ENCODE measurements at regions of chr11 and their contacts with region 1.

Region 1: GRCh38 chr11:66317723-66318599 is 1.1 kb upstream of the CD248 start:
- DNase-seq: peak; percentile 46
- ATAC-seq: peak; percentile 8
- H3K4me3 Mint-ChIP-seq: peak overlapping the region; percentile 57
- H3K27ac Mint-ChIP-seq: peak overlapping the region; percentile 96; the same call in 1 of the 2 replicates
- H3K4me1 Mint-ChIP-seq: peaks cover 26% of the 10 kb centered on the region
- H3K27me3 Mint-ChIP-seq: peaks cover 22% of the 10 kb centered on the region
- CTCF ChIP-seq: no peak

Region 2: GRCh38 chr11:65941720-65942310 is 376.1 kb before region 1 on chr11:
- CTCF ChIA-PET with region 1: no interaction called
- POLR2A ChIA-PET with region 1: no interaction called
- DNase-seq: no peak
- ATAC-seq: no peak
- H3K4me3 Mint-ChIP-seq: no peak overlapping the region
- H3K27ac Mint-ChIP-seq: peak overlapping the region; percentile 13
- H3K4me1 Mint-ChIP-seq: peaks cover 49% of the 10 kb centered on the region
- H3K27me3 Mint-ChIP-seq: peaks cover 7% of the 10 kb centered on the region; the same call in 1 of the 2 replicates
- CTCF ChIP-seq: no peak

Region 3: GRCh38 chr11:66142370-66143263 is 175.3 kb before region 1 on chr11:
- CTCF ChIA-PET with region 1: no interaction called
- POLR2A ChIA-PET with region 1: no interaction called
- DNase-seq: no peak
- ATAC-seq: no peak
- H3K4me3 Mint-ChIP-seq: no peak overlapping the region
- H3K27ac Mint-ChIP-seq: no peak overlapping the region
- H3K4me1 Mint-ChIP-seq: peaks cover 17% of the 10 kb centered on the region
- H3K27me3 Mint-ChIP-seq: no peaks in the 10 kb centered on the region
- CTCF ChIP-seq: no peak

Region 4: GRCh38 chr11:66192181-66192863 is 125.6 kb before region 1 on chr11:
- CTCF ChIA-PET with region 1: no interaction called
- POLR2A ChIA-PET with region 1: no interaction called
- DNase-seq: no peak
- ATAC-seq: no peak
- H3K4me3 Mint-ChIP-seq: no peak overlapping the region
- H3K27ac Mint-ChIP-seq: peak overlapping the region; percentile 56
- H3K4me1 Mint-ChIP-seq: peaks cover 6% of the 10 kb centered on the region; the same call in 1 of the 2 replicates
- H3K27me3 Mint-ChIP-seq: no peaks in the 10 kb centered on the region
- CTCF ChIP-seq: no peak

Region 5: DNA sequence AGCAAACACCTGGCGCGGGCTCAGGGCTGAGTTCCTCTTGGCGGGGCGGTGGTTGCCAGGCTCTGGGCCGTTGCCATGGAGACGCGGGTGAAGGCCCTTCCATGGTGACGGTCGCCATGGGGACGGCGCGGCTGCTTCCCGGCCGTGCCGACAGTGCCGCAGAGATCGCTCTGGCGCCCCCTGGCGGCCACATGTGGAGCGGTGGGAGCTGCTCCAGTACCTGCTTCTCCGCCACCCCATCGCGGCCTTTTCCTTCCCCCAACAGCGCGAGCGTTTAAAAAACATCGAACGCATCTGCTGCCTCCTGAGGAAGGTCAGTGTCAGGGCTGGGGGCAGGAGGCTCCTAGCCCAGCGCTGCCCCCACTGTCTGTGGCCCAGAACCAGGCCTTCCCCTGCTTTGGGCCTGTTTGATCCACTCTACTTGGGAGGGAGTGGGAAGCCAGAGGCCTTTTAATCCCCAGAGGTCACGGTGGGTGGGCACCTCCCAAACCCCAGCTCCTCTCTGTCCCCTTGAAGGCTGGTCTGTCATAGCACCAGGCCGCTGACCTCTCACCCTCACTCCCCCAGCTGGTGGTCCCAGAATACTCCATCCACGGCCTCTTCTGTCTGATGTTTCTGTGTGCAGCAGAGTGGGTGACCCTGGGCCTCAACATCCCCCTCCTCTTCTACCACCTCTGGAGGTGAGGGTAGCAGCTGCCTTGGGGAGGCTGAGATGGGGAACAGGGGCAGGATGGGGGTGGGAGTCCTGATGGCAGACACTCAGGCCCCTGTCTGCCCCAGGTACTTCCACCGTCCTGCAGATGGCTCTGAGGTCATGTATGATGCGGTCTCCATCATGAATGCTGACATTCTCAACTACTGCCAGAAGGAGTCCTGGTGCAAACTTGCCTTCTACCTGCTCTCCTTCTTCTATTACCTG is 35.2 kb before region 1 on chr11:
- CTCF ChIA-PET with region 1: interaction called, 23 read pairs
- POLR2A ChIA-PET with region 1: no interaction called
- DNase-seq: peak; percentile 100
- ATAC-seq: peak; percentile 79
- H3K4me3 Mint-ChIP-seq: no peak overlapping the region; the same call in 1 of the 2 replicates
- H3K27ac Mint-ChIP-seq: 0 out of 2 replicates have a peak overlapping the region, but pooled peaks have one; percentile 15
- H3K4me1 Mint-ChIP-seq: peaks cover 24% of the 10 kb centered on the region
- H3K27me3 Mint-ChIP-seq: peaks cover 22% of the 10 kb centered on the region
- CTCF ChIP-seq: peak; percentile 98

Region 6: GRCh38 chr11:66288671-66289547 is 29.1 kb before region 1 on chr11 and contains the start of gene YIF1A:
- CTCF ChIA-PET with region 1: interaction called, 65 read pairs
- POLR2A ChIA-PET with region 1: interaction called, 19 read pairs
- DNase-seq: peak; percentile 98
- ATAC-seq: peak; percentile 95
- H3K4me3 Mint-ChIP-seq: peak within 1 kb of the TSS; percentile 96
- H3K27ac Mint-ChIP-seq: peak within 1 kb of the TSS; percentile 96
- H3K4me1 Mint-ChIP-seq: peaks cover 20% of the 10 kb centered on the region
- H3K27me3 Mint-ChIP-seq: peaks cover 37% of the 10 kb centered on the region
- CTCF ChIP-seq: no peak
- total RNA-seq, gene YIF1A: 86.0 to 86.9 TPM (median 86.4 TPM) in 3 replicates

Region 7: GRCh38 chr11:66328307-66329144 is 10.6 kb after region 1 on chr11:
- CTCF ChIA-PET with region 1: interaction called, 319 read pairs
- POLR2A ChIA-PET with region 1: interaction called, 8 read pairs
- DNase-seq: peak; percentile 85
- ATAC-seq: peak; percentile 83
- H3K4me3 Mint-ChIP-seq: peak overlapping the region; percentile 50
- H3K27ac Mint-ChIP-seq: no peak overlapping the region
- H3K4me1 Mint-ChIP-seq: peaks cover 15% of the 10 kb centered on the region
- H3K27me3 Mint-ChIP-seq: peaks cover 11% of the 10 kb centered on the region
- CTCF ChIP-seq: peak; percentile 98

Region 8: DNA sequence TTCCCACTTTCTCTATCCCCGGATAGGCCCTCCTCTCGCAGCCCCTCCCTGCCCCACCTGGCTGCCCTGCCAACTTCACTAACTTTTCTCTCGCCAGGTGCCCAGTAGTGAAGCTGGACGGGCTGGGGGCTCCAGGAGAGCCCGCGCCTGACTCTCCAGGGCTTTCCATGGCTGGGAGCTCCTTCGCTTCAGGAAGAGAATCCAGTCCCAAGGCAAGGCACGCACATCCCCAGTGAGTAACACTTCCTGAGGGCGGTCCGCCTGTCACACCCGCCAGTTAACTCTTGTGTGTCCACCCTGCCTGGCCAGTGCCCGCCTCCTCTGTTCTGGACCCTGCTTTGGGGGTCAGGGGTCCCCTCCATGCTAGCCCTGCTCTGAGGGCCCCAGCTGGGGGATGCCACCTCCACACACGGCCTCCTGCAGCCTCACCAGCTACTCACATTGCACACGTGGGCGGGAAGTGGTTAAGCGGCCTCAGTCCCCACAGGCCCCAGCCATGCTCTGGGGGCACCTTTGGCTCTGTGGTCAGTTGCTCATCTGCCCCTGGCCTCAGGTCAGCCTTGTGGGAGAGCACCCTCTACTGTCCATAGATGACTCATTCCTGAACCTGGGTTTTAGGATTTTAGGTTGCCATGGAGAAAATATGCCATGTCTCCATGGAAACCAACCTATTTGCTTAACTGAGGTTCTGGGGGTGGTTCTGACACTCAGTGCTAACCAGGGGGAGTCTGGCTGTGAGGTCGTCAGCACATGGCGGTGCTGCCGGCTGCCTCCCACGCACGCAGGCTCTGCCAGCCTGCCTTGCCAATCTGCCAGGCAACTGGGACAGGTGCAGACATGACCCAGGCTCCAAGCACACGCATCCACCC is 18.5 kb after region 1 on chr11 and contains the start of gene RIN1:
- CTCF ChIA-PET with region 1: interaction called, 319 read pairs
- POLR2A ChIA-PET with region 1: interaction called, 20 read pairs
- DNase-seq: peak; percentile 57
- ATAC-seq: peak; percentile 70
- H3K4me3 Mint-ChIP-seq: peak within 1 kb of the TSS; percentile 82
- H3K27ac Mint-ChIP-seq: 0 out of 2 replicates have a peak within 1 kb of the TSS, but pooled peaks have one; percentile 78
- H3K4me1 Mint-ChIP-seq: peaks cover 16% of the 10 kb centered on the region
- H3K27me3 Mint-ChIP-seq: no peaks in the 10 kb centered on the region
- CTCF ChIP-seq: no peak
- total RNA-seq, gene RIN1: 4.7 to 5.5 TPM (median 5.0 TPM) in 3 replicates

Region 9: GRCh38 chr11:66659763-66660162 is 341.8 kb after region 1 on chr11:
- CTCF ChIA-PET with region 1: no interaction called
- POLR2A ChIA-PET with region 1: interaction called, 13 read pairs
- DNase-seq: no peak
- ATAC-seq: no peak
- H3K4me3 Mint-ChIP-seq: no peak overlapping the region
- H3K27ac Mint-ChIP-seq: peak overlapping the region; percentile 16
- H3K4me1 Mint-ChIP-seq: no peaks in the 10 kb centered on the region
- H3K27me3 Mint-ChIP-seq: no peaks in the 10 kb centered on the region
- CTCF ChIP-seq: no peak

Measured in WTC11 (cell line).